Gastrocnemius medialis (tissue), 4 donors: ENCODE measurements at regions of chr6 and their contacts with region 1.

Region 1: DNA sequence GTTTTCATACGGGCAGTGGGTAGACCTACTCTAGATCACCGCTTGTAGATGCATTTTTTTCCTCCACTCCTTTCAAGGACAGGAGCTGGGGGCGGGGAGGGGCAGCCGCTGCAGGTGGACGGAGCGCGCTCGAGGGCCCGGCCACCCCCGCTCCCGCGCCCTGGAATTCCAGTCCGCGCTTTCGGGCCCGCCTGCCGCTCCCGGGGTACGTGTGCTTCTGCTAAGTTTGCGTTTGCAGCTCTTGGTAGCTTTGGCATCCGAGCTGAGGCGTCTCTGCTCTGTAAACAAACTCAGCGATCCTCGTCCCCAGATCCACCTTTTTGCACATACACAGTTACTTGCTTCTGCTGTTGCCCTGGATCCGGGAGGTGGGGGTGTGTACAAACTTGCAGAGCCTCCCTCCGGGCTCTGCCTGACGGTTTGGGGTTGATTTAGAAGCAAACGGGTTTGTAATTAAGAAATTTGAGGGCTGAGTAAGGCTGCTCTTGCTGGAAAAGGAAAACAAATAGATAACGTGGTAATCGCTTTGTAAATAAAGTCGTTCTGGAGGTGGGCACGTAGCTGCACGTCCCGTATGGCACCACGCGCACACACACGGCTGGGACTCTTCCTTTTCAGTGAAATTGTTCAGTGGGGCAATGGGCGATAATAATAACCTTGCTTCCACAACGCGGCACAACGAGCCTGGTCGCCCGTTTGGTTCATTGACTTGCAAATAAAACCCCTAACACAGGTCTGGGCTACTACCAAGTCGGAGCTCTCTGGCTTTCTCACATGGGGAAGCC is 976 bp upstream of the CITED2 start:
- DNase-seq: peak; percentile 93 to 94
- ATAC-seq: peak; percentile 63 to 71
- H3K4me3 ChIP-seq: peak overlapping the region; percentile 85 to 97 (median 87)
- H3K27ac ChIP-seq: peak overlapping the region; percentile 94 to 97 (median 96)
- H3K4me1 ChIP-seq: peaks cover 22 to 26% of the 10 kb centered on the region in 2 donors
- H3K27me3 ChIP-seq: no peaks in the 10 kb centered on the region
- CTCF ChIP-seq: no peak
- POLR2A ChIP-seq: peak; percentile 38 to 74

Region 2: DNA sequence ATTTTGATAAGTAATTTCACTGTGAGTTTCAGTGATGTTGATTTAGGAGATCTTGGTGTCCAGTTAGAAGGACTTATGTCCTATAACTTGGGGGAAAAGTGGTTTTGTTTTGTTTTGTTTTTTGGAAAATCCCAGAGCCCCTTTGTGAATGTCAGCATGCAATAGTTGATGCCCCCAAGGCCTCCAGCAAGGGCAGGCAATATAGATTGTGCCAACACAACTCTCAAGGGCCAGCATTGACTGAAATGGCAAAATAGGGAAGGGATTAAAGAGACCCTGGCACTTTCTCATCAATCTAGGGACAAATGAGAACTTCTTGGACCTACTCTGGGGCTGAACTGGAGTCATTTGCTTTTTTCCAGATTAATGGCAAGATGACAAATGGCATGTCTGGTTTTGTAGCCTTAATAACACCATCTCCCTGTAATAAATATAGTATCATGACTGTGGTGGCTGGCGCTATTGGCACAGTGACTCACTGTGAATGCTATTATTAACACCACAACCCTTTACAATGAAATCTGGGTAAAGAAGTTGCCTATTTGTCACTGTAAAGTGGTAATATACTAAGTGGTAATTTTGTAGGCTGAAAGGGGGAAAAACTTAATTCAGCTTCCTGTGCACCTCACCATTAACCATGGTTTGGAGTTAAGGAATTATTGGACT is 295.0 kb before region 1 on chr6:
- in situ Hi-C with region 1: no loop called
- intact Hi-C with region 1: no loop called
- DNase-seq: peak; percentile 24 to 31
- ATAC-seq: peak; percentile 90 to 99
- H3K4me3 ChIP-seq: no peak overlapping the region
- H3K27ac ChIP-seq: peak overlapping the region; percentile 50 to 80 (median 70)
- H3K4me1 ChIP-seq: peaks cover 12 to 17% of the 10 kb centered on the region in 2 donors
- H3K27me3 ChIP-seq: no peaks in the 10 kb centered on the region
- CTCF ChIP-seq: no peak
- POLR2A ChIP-seq: no peak

Region 3: GRCh38 chr6:139291813-139292619 is 83.4 kb before region 1 on chr6 and contains the start of gene TXLNB:
- in situ Hi-C with region 1: no loop called
- intact Hi-C with region 1: loop called (anchors 5 kb)
- DNase-seq: peak; percentile 94 to 97
- ATAC-seq: peak; percentile 78 to 79
- H3K4me3 ChIP-seq: peak within 1 kb of the TSS; percentile 47 to 57 (median 50)
- H3K27ac ChIP-seq: peak within 1 kb of the TSS; percentile 92 to 96 (median 94)
- H3K4me1 ChIP-seq: peaks cover 32 to 40% of the 10 kb centered on the region in 2 donors
- H3K27me3 ChIP-seq: no peaks in the 10 kb centered on the region
- CTCF ChIP-seq: peak in 3 of 5 experiments; percentile 16 to 34 (median 24)
- POLR2A ChIP-seq: peak; percentile 70 to 83
- total RNA-seq, gene TXLNB: 58.3 to 197 (median 124) TPM

Region 4: DNA sequence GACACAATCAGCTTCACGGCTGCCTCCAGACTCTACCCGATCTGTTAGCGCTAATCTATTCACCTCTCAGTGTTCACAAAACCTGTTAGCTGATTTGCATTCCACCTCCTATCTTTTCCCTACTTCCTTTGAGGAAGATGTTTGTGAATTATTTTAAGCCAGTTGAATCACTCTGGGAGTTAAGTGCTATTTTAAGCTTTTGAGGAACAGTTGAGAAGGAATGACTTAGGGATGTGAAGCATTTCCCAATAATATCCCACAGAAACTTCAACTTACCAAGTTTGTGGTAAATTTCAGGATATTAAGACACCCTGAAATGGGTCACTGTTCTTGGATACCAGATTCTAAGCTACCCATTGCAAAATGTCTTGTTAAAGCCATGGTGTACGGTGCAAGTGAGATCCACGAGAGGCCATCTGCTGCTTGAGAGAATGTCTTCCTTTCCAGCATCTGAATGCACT is 144.2 kb after region 1 on chr6:
- in situ Hi-C with region 1: no loop called
- intact Hi-C with region 1: no loop called
- DNase-seq: no peak
- ATAC-seq: peak; percentile 56 to 75
- H3K4me3 ChIP-seq: no peak overlapping the region
- H3K27ac ChIP-seq: peak overlapping the region in 2 of 4 donors; percentile 8 to 30
- H3K4me1 ChIP-seq: peaks cover 2 to 4% of the 10 kb centered on the region in 2 donors
- H3K27me3 ChIP-seq: no peaks in the 10 kb centered on the region
- CTCF ChIP-seq: no peak
- POLR2A ChIP-seq: no peak

Region 5: DNA sequence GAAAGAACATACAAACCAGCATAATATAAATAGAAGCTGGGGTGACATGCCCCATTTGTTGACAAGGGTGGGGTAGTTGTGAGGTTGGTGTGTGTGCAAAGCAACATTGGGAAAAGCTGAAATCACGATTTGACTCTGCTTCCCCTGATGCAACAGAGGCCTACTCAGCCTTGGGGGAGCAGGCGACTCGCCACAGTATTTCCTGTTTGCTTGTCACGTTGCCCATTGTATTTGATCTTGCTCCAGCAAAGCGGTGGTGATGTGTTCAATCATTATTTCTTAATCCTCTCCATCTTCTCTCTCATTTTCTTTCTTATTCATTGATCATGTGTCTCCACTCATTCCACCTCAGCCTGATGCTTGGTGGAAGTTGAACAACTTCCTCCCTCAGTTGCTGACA is 164.9 kb after region 1 on chr6:
- in situ Hi-C with region 1: no loop called
- intact Hi-C with region 1: loop called (anchors 2 kb)
- DNase-seq: peak; percentile 19 to 46
- ATAC-seq: peak; percentile 30 to 34
- H3K4me3 ChIP-seq: peak overlapping the region in 1 of 4 donors; percentile 23
- H3K27ac ChIP-seq: peak overlapping the region; percentile 72 to 77 (median 74)
- H3K4me1 ChIP-seq: peaks cover 11 to 12% of the 10 kb centered on the region in 2 donors
- H3K27me3 ChIP-seq: no peaks in the 10 kb centered on the region
- CTCF ChIP-seq: no peak
- POLR2A ChIP-seq: no peak

Region 6: GRCh38 chr6:139764498-139764986 is 389.1 kb after region 1 on chr6:
- in situ Hi-C with region 1: loop called in 3 of 4 experiments (anchors 5 to 25 kb)
- intact Hi-C with region 1: loop called (anchors 2 kb)
- DNase-seq: peak; percentile 76 to 85
- ATAC-seq: peak; percentile 95 to 98
- H3K4me3 ChIP-seq: no peak overlapping the region
- H3K27ac ChIP-seq: peak overlapping the region; percentile 84 to 93 (median 89)
- H3K4me1 ChIP-seq: peaks cover 50 to 55% of the 10 kb centered on the region in 2 donors
- H3K27me3 ChIP-seq: no peaks in the 10 kb centered on the region
- CTCF ChIP-seq: no peak
- POLR2A ChIP-seq: peak in 1 of 2 donors; percentile 49

Region 7: DNA sequence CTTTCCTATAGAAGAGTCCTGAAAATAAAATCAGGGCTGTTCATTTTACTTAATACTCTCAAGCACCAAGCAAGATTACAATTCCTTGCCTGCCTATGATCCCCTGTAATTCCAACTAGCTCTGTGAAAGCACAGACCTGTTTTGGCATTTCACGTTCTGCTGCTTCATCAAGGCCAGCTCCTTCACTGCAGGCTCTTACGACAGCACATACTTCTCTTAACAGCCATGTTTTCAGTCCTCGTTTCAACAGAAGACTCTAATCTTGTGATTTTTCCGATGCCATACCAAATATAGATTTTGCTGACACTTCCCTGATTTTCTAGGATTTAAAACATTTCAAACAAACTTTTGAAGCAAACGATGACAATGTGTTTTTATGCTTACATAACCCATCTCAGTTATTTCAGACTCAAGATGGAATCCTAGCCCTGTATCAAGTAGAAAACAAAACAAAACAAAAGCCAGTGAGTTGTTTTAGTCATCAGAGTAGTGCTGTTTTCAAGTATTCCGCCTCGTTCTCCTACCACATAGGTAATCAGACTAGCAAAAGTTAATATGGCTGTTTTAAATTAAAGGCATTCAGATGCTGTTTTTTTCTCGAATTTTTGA is 615.5 kb after region 1 on chr6:
- in situ Hi-C with region 1: no loop called
- intact Hi-C with region 1: loop called (anchors 5 kb)
- DNase-seq: no peak
- ATAC-seq: peak in 1 of 2 donors; percentile 83
- H3K4me3 ChIP-seq: peak overlapping the region in 1 of 4 donors; percentile 8
- H3K27ac ChIP-seq: peak overlapping the region in 2 of 4 donors; percentile 9 to 11
- H3K4me1 ChIP-seq: peaks cover 7 to 8% of the 10 kb centered on the region in 2 donors
- H3K27me3 ChIP-seq: no peaks in the 10 kb centered on the region
- CTCF ChIP-seq: no peak
- POLR2A ChIP-seq: no peak